A549 (cell line): ENCODE measurements at regions of chr20 and their contacts with region 1.

Region 1: GRCh38 chr20:17504898-17505635 is 26.1 kb downstream of the BFSP1 start:
- DNase-seq: peak; percentile 45 to 53
- ATAC-seq: peak; percentile 45 to 77
- H3K4me3 ChIP-seq: 0 out of 3 replicates have a peak overlapping the region, but pooled peaks have one; percentile 15
- H3K27ac ChIP-seq: peak overlapping the region; percentile 30 to 64; a peak in 4 of 6 replicates
- H3K4me1 ChIP-seq: 0 out of 3 replicates have a peak, but pooled peaks cover 3% of the 10 kb centered on the region
- CTCF ChIP-seq: peak; percentile 98
- EP300 ChIP-seq: no peak
- POLR2A ChIP-seq: no peak
- RAD21 ChIP-seq: peak; percentile 91 to 95

Region 2: DNA sequence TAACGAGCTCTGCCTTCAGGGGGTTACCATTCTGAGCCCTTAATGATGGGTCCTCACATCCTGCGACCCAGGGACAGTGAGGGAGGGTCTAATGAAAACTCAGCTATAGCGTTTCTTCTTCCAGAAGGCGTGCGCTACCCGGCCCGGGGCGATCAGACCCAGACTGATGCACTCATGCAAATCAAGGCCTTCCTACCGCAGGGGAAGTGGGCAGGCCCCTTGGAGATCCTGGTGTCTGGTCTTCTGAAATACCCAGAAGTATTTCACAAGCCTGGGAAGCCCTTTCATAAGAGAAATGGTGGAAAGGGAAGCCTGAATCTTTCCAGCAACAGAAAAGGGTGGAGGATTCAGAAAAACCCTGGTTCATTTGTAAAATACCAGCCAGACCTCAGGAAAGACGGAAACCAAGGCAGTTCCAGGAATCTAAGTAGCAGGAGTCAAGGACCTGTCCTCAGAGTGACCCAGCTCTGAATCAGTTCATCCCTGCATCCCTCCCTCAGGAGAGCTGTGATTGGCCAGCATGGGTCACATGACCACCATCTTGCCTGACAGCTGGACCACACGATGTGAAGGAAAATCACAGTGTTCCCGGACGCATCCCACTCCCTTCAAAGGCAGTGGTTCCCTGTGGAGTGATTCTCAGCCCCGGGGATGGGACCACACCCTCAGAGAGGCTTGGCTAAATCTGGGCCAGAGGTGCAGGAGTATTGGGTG is 13.4 kb after region 1 on chr20:
- CTCF ChIA-PET with region 1: interaction called, 43 read pairs
- POLR2A ChIA-PET with region 1: no interaction called
- DNase-seq: no peak
- ATAC-seq: peak in 1 of 2 experiments; percentile 60; a peak in 3 of 6 replicates
- H3K4me3 ChIP-seq: no peak overlapping the region
- H3K27ac ChIP-seq: no peak overlapping the region
- H3K4me1 ChIP-seq: no peaks in the 10 kb centered on the region
- CTCF ChIP-seq: no peak
- EP300 ChIP-seq: no peak
- POLR2A ChIP-seq: no peak
- RAD21 ChIP-seq: no peak

Region 3: DNA sequence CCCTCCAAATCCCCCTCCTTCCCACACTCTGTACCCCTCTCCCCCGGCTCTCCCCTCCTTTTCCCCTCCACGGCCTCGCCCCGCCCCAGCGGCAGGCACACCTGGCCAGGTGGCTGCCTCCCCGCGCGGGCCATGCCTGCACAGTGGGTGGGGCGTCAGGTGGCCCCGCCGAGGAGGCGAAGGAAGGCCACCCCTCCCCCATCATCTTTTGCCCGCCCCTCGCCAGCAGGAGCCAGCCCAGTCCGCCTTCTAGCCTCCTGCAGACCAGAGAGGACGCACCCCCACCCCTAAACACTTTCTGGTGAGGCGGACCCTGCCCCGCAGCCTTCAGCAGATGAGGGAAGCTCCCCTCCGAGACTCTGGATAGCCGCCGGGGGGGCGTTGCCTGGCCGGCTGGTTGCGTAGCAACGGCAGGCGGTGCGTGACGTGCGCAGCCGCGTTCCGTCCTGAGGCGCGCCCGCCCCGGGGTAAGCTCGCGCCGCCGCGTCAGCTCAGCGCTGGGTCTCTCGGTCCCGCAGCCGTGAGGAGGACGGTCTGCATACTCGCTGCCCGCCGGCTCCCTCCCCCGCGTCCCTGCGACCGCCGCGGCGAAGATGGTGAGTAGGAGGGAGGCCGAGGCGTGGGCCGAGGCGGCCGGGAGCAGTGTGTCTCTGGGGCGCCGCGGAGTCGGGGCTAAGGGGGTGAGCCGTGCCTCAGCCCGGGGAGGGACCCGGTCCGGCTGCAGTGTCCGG is 64.7 kb after region 1 on chr20 and contains the start of gene DSTN:
- CTCF ChIA-PET with region 1: interaction called, 17 read pairs
- POLR2A ChIA-PET with region 1: no interaction called
- DNase-seq: peak; percentile 96 to 99
- ATAC-seq: peak; percentile 85 to 88
- H3K4me3 ChIP-seq: peak within 1 kb of the TSS; percentile 87
- H3K27ac ChIP-seq: peak within 1 kb of the TSS; percentile 91 to 96
- H3K4me1 ChIP-seq: peaks cover 51% of the 10 kb centered on the region
- CTCF ChIP-seq: no peak
- EP300 ChIP-seq: peak in 1 of 2 experiments; percentile 16; a peak in 1 of 5 replicates
- POLR2A ChIP-seq: peak; percentile 98
- RAD21 ChIP-seq: peak in 1 of 2 experiments; percentile 9; a peak in 1 of 5 replicates
- polyA plus RNA-seq, gene DSTN: 425 and 544 TPM in 2 replicates

Region 4: GRCh38 chr20:17617551-17618223 is 112.6 kb after region 1 on chr20:
- CTCF ChIA-PET with region 1: interaction called, 230 read pairs
- POLR2A ChIA-PET with region 1: interaction called, 6 read pairs
- DNase-seq: peak; percentile 74 to 83
- ATAC-seq: peak; percentile 64 to 72
- H3K4me3 ChIP-seq: no peak overlapping the region
- H3K27ac ChIP-seq: no peak overlapping the region
- H3K4me1 ChIP-seq: peaks cover 12% of the 10 kb centered on the region; the same call in 2 of the 3 replicates
- CTCF ChIP-seq: peak; percentile 87
- EP300 ChIP-seq: no peak
- POLR2A ChIP-seq: no peak
- RAD21 ChIP-seq: peak; percentile 97 to 99

Region 5: GRCh38 chr20:17648791-17649730 is 144.0 kb after region 1 on chr20:
- CTCF ChIA-PET with region 1: interaction called, 36 read pairs
- POLR2A ChIA-PET with region 1: no interaction called
- DNase-seq: peak; percentile 26 to 62
- ATAC-seq: peak; percentile 51 to 74; a peak in 3 of 6 replicates
- H3K4me3 ChIP-seq: no peak overlapping the region
- H3K27ac ChIP-seq: no peak overlapping the region
- H3K4me1 ChIP-seq: peaks cover 20% of the 10 kb centered on the region
- CTCF ChIP-seq: peak; percentile 50
- EP300 ChIP-seq: no peak
- POLR2A ChIP-seq: no peak
- RAD21 ChIP-seq: peak; percentile 32 to 34; a peak in 3 of 5 replicates

Region 6: DNA sequence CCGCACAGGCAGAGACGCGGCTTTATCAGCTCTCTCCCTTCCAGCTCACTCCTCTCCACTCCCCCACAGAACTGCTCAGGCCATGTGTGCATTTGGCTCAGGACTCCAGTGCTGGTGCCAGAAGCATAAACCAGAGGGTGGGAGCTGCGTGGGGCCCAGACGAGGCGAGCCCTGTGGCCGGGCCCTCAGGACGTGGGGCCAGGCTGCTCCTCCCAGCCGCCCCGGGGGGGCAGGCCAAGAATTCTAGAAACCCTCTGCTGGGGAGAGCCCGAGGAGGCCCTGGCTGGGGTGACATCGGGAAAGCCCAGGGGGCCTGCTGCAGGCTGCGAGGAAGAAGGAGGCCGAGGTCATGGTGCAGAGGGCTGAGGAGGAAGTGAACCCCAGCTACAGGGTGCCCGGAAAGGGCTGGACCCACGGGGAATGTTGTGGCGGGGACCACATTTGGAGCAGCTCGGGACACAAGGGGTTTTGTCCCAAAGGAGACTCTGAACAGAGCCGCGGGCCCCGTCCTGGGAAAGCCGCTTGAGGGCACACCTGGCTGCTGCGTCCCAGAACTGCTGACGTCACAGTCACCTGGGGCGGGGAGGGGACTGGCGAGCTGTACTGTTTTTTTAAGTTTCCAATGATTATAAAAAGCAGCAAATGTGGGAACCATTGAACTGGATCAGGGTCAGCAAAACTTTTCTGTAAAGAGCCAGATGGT is 301.8 kb after region 1 on chr20:
- CTCF ChIA-PET with region 1: no interaction called
- POLR2A ChIA-PET with region 1: no interaction called
- DNase-seq: no peak
- ATAC-seq: no peak
- H3K4me3 ChIP-seq: no peak overlapping the region
- H3K27ac ChIP-seq: no peak overlapping the region
- H3K4me1 ChIP-seq: no peaks in the 10 kb centered on the region
- CTCF ChIP-seq: no peak
- EP300 ChIP-seq: no peak
- POLR2A ChIP-seq: no peak
- RAD21 ChIP-seq: no peak

Region 7: GRCh38 chr20:17938871-17939619 is 434.0 kb after region 1 on chr20:
- CTCF ChIA-PET with region 1: interaction called, 19 read pairs
- POLR2A ChIA-PET with region 1: no interaction called
- DNase-seq: peak; percentile 58 to 75
- ATAC-seq: peak; percentile 68 to 83
- H3K4me3 ChIP-seq: no peak overlapping the region
- H3K27ac ChIP-seq: no peak overlapping the region
- H3K4me1 ChIP-seq: no peaks in the 10 kb centered on the region; the same call in 2 of the 3 replicates
- CTCF ChIP-seq: peak; percentile 61
- EP300 ChIP-seq: no peak
- POLR2A ChIP-seq: no peak
- RAD21 ChIP-seq: peak; percentile 74 to 75